A673 (cell line): ENCODE measurements at regions of chr22 and their contacts with region 1.

Region 1: GRCh38 chr22:20186183-20186870 is 35.5 kb upstream of the CCDC188 start:
- DNase-seq: peak; percentile 30
- H3K4me3 ChIP-seq: no peak overlapping the region
- H3K27ac ChIP-seq: no peak overlapping the region
- H3K4me1 ChIP-seq: no peaks in the 10 kb centered on the region
- H3K27me3 ChIP-seq: no peaks in the 10 kb centered on the region
- CTCF ChIP-seq: peak; percentile 37; the same call in 1 of the 2 replicates

Region 2: GRCh38 chr22:20211997-20212753 is 25.8 kb after region 1 on chr22:
- CTCF ChIA-PET with region 1: no interaction called
- POLR2A ChIA-PET with region 1: interaction called, 13 read pairs
- intact Hi-C with region 1: no loop called
- DNase-seq: peak; percentile 91
- H3K4me3 ChIP-seq: peak overlapping the region; percentile 9
- H3K27ac ChIP-seq: peak overlapping the region; percentile 76
- H3K4me1 ChIP-seq: peaks cover 34% of the 10 kb centered on the region
- H3K27me3 ChIP-seq: no peaks in the 10 kb centered on the region
- CTCF ChIP-seq: no peak